ENCODE measurements at regions of chr5 and their contacts with region 1.

Region 1: DNA sequence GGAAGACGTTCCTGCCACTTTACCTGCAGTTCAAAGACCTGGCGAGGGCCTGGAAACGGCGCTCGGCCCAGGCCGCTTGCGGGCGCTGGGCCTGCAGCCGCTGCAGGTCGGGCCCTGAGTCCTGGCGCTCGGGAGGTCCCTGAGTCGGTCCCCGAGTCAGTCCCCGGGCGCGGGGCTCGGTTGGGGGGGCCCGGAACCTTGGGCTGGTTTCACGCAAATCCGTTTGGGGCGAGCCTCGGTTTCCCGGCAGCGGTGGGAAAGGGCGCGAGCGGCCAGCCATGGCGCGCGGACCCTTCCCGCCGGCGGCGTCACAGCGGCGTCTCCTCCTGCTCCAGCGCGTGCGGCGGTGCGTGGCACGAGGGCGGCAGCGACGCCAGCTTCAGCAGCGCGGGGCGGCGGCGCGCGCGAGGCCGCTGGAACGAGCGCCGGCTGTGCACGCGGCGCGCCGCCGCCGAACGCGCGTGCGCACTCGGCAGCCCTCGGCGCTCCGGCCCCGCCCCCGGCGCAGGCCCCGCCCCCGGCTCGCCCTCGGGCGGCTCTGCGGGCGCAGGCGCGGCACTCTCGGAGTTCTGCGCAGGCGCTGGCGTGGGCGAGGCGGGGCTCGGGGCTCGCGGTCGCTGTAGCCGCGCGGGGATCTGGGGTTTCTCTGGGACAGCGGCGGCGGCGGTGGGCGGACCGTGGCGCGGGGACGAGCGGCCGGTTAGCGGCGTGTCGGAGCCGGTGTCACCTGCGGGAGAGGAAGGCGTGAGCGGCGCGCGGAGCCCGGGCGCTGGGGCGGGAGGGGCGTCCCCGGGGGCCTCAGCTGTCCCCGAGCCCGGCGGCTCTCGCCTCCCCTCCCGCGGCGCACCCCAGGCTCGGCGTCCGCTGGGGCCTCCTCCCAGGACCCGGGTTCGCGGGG is 29.9 kb downstream of the EXOC3 start:
- DNase-seq: peak; percentile 84
- H3K4me3 Mint-ChIP-seq: peak overlapping the region; percentile 83
- H3K27ac Mint-ChIP-seq: peak overlapping the region; percentile 74
- H3K4me1 Mint-ChIP-seq: peaks cover 6% of the 10 kb centered on the region
- H3K27me3 Mint-ChIP-seq: peaks cover 8% of the 10 kb centered on the region

Region 2: DNA sequence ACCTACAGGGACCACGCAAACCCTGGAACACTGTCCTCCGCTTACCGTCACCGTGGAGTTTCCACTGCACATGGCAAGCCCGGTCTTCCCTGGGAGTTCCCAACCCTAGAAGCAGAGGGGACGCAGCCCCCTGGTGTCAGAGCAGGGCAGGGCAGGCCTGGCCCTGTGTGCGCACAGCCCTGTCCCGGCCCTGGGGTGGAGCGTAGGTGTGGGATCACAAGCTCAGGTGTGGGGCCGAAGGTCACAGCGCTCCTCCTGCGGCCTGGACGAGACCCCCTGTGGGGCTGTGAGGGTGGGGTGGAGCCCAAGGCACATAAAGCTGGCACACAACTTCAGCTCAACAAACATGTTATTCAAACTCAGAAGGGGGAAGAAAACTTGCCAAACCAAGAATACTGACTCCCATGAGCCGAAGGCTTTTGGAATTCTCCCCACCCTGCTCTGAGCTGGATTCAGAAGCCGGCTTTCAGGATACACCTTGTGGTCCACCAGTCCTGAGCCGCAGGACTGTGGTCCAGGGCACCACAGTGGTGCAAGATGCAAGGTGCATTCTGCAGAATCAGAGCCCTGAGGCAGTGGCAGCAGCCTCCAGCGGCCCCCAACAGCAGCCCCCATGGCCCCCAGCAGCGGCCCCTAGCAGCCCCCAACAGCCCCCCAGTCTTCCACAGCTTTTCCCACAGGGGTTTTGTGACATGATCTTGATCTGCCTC is 41.7 kb before region 1 on chr5:
- intact Hi-C with region 1: no loop called
- DNase-seq: peak; percentile 27
- H3K4me3 Mint-ChIP-seq: no peak overlapping the region
- H3K27ac Mint-ChIP-seq: no peak overlapping the region
- H3K4me1 Mint-ChIP-seq: peaks cover 4% of the 10 kb centered on the region
- H3K27me3 Mint-ChIP-seq: no peaks in the 10 kb centered on the region

Region 3: DNA sequence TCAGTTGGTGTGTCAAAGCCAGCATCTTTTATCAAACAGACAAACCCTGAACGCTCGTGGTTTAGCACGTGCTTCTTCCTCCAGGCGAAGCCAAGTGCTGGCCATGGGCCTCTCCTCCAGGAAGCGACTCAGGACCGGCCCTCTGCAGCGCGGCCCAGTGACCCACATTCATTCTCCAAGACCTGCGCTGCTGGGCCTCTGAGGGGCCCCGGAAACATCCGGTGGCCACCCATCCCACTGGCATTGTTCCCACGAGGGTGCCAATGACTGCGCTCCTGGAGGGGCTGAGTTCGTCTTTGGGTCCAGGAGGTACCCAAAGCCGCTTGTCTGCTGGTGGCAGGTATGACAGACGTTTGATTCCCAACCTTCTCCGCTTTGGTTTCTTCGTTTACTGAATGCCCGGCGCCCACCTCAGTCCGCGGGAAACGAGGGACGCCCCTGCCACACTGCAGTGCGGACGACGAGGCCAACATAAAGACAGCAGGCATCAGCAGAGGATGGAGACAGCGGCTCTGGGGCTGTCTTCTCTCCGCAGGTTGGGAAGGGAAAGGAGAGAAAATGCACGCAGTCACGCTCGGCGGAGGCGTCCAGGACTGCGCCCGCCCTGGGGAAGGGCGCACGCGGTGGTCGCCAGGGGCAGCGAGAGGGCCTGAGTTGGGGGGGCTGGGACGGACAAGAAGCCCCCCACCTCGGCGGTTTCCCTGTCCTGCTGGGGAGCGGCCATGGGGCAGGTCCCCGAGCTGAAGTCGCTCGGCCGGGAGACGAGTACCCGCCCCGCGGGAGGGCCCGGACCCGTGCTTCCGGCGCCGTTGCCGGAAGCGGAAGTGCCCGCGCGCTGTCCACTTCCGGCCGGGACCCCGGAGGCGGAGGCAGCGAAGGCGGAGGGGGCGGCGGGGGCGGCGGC is 30.3 kb before region 1 on chr5 and contains the start of gene EXOC3:
- intact Hi-C with region 1: loop called (anchors 2 kb)
- DNase-seq: peak; percentile 76
- H3K4me3 Mint-ChIP-seq: peak within 1 kb of the TSS; percentile 97
- H3K27ac Mint-ChIP-seq: peak within 1 kb of the TSS; percentile 96
- H3K4me1 Mint-ChIP-seq: peaks cover 19% of the 10 kb centered on the region
- H3K27me3 Mint-ChIP-seq: peaks cover 3% of the 10 kb centered on the region
- total RNA-seq, gene EXOC3: 59.6 and 62.0 TPM in 2 replicates

Region 4: DNA sequence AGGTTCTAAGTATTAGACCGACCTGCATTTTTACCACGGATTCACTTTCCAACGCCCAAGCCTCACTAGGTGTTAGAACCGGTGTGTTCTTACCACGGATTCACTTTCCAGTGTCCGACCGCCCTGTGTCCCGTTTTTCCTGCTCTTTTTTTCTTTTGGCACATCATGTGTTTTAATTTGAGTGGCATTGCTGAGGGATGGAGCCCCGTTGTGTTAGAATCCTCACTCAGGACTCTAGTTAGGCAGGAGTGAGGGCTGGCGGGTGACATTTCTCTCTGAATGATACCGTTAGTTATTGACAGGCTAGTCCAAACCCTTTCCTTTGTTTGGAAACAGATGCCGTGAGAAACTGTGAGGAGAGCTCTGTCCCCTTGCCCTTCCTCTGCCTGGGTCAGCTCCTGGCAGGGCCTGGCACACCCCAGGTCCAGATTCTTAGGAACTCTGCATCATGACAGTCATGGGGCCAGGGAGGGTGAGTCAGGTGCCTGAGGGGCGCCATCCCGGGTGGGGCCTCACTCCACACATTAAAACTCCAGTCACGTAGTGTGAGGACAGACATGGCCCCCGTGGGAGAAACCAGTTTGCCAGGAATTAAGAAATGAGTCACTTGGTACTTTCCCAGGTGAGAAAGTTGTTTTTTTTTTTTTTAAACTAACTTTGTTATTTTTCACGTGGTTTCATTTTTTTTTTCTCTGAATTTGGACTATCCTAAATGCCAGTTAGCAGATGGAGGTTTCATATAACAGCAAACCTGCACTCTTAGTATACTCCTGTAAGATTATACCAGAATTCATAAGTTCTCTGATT is 14.2 kb before region 1 on chr5:
- intact Hi-C with region 1: loop called (anchors 1 kb)
- DNase-seq: peak; percentile 56
- H3K4me3 Mint-ChIP-seq: peak overlapping the region; percentile 59
- H3K27ac Mint-ChIP-seq: peak overlapping the region; percentile 91
- H3K4me1 Mint-ChIP-seq: peaks cover 75% of the 10 kb centered on the region
- H3K27me3 Mint-ChIP-seq: no peaks in the 10 kb centered on the region

Region 5: GRCh38 chr5:611721-612486 is 139.0 kb after region 1 on chr5 and contains the start of gene CEP72:
- intact Hi-C with region 1: loop called (anchors 1 kb)
- DNase-seq: peak; percentile 87
- H3K4me3 Mint-ChIP-seq: peak within 1 kb of the TSS; percentile 94
- H3K27ac Mint-ChIP-seq: peak within 1 kb of the TSS; percentile 90
- H3K4me1 Mint-ChIP-seq: peaks cover 54% of the 10 kb centered on the region
- H3K27me3 Mint-ChIP-seq: no peaks in the 10 kb centered on the region
- total RNA-seq, gene CEP72: 32.4 and 35.7 TPM in 2 replicates

Region 6: GRCh38 chr5:691817-692528 is 219.1 kb after region 1 on chr5:
- intact Hi-C with region 1: loop called (anchors 5 kb)
- DNase-seq: no peak
- H3K4me3 Mint-ChIP-seq: peak overlapping the region; percentile 54
- H3K27ac Mint-ChIP-seq: no peak overlapping the region
- H3K4me1 Mint-ChIP-seq: no peaks in the 10 kb centered on the region
- H3K27me3 Mint-ChIP-seq: no peaks in the 10 kb centered on the region

Region 7: DNA sequence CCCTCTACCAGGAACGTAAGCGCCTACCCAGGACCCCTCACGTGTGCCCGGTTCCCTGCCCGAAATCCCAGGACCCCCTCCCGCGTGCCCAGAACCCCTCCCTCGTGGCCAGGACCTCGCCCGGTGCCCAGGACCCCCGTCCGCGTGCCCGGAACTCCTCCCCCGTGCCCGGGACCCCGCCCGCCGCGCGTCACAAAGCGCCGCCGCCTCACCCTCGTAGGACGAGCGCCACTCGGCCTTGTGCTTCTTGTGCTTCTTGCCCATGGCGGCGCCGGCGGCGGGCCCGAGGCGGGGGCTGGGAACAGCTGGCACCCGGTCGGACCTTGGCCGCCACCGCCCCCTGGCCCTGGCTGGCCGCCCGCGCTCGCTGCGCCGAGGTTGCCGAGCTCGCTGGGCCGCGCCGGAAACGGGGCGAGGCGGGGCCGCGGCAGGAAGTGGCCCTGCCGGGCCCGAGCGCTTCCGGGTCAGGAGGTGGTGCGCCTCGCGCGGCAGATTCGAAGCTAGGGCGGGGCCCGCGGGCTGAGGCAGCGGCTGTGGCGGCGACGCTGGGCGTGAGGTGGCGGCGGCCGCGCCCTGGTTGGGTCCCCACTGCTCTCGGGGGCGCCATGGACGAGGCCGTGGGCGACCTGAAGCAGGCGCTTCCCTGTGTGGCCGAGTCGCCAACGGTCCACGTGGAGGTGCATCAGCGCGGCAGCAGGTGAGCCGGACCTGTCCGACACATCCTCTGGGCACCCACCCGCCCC is 419.7 kb after region 1 on chr5 and contains the starts of genes BRD9 and TRIP13:
- intact Hi-C with region 1: loop called (anchors 5 kb)
- DNase-seq: peak; percentile 84
- H3K4me3 Mint-ChIP-seq: peak within 1 kb of the TSS; percentile 92
- H3K27ac Mint-ChIP-seq: peak within 1 kb of the TSS; percentile 90
- H3K4me1 Mint-ChIP-seq: peaks cover 26% of the 10 kb centered on the region
- H3K27me3 Mint-ChIP-seq: no peaks in the 10 kb centered on the region
- total RNA-seq, gene BRD9: 77.8 and 81.6 TPM in 2 replicates
- total RNA-seq, gene TRIP13: 37.2 and 38.4 TPM in 2 replicates

Measured in activated T-helper 1 cell treated with anti-CD3 and anti-CD28 coated beads, Interleukin-12 subunit alpha, Interleukin-12 subunit beta, Interleukin-2, Interleukin-4 antibody, amounts not matched to agents 30 ng/mL and 10 ng/mL and 1 ng/mL, durations not matched to agents 14 hours and 24 hours and 36 hours (primary cell).